Posterior vena cava (tissue), 2 donors: ENCODE measurements at regions of chr6 and their contacts with region 1.

Region 1: GRCh38 chr6:49764571-49765236 is 20.5 kb upstream of the CRISP3 start:
- DNase-seq: no peak

Region 2: DNA sequence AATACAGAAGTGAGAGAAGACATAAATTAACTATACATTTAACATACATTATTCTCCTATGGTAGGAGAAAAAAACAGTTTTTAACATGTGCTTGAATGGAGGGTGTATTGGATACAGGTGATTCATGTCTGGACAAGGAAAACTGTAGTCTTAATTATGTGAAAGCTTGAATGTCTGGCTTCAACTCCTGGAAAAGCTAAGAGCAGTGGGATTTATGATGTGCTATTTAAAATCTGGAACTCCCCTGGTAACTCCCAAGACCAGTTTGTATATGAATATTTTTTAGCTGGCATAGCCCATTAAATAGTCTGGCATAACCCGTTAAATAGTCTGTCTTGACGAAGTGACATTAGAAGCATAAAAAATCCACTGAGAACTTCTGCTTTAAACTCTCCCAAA is 1243.8 kb before region 1 on chr6:
- intact Hi-C with region 1: loop called in 1 of 2 experiments (anchors 5 kb)
- DNase-seq: no peak

Region 3: GRCh38 chr6:49299279-49299678 is 465.4 kb before region 1 on chr6:
- intact Hi-C with region 1: no loop called
- DNase-seq: no peak

Region 4: GRCh38 chr6:49541210-49541724 is 223.4 kb before region 1 on chr6:
- intact Hi-C with region 1: no loop called
- DNase-seq: no peak

Region 5: GRCh38 chr6:49744259-49744658 is 20.4 kb before region 1 on chr6 and contains the start of gene CRISP3:
- intact Hi-C with region 1: no loop called
- DNase-seq: no peak
- total RNA-seq, gene CRISP3: 0.10 to 0.19 TPM